PC-9 (cell line): ENCODE measurements at regions of chr3 and their contacts with region 1.

Region 1: GRCh38 chr3:150238998-150239619 is 169.0 kb upstream of the TSC22D2 start:
- DNase-seq: peak; percentile 36 to 41
- H3K4me3 ChIP-seq: peak overlapping the region; percentile 37; the same call in 1 of the 2 replicates
- H3K27ac ChIP-seq: peak overlapping the region; percentile 91
- H3K4me1 ChIP-seq: peaks cover 43% of the 10 kb centered on the region
- H3K27me3 ChIP-seq: no peaks in the 10 kb centered on the region
- CTCF ChIP-seq: peak; percentile 62

Region 2: DNA sequence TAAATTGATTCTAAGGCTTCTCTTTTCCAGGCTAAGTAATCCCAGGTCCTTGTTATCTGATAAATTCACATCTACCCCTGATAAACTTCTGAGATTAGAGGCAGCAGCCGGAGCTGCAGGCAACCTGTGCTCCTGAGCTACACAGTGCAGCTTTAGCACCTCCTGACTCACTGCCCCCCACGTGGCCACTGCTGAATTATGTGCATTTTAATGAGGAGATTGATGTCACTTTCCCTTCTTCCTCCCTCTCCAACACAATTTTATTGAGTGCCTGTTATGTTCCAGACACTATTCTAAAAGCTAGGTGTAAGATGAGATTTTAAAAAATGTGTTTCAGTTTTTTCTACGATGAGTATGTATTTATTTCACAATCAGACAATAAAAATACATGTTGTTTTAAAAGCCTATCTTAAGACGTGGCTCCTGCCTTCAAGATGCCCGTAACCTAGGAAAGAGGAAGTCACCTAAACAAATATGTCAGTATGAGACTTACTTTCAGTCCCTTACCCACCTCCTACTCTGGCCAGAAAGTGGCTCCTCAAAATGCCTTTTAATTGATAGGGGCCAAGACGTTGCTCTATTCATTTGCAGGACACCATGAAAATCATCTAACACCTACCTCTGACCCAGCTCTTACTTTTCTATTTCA is 106.9 kb before region 1 on chr3:
- CTCF ChIA-PET with region 1: no interaction called
- POLR2A ChIA-PET with region 1: no interaction called
- intact Hi-C with region 1: no loop called
- DNase-seq: no peak
- H3K4me3 ChIP-seq: no peak overlapping the region
- H3K27ac ChIP-seq: no peak overlapping the region
- H3K4me1 ChIP-seq: no peaks in the 10 kb centered on the region
- H3K27me3 ChIP-seq: no peaks in the 10 kb centered on the region
- CTCF ChIP-seq: no peak

Region 3: DNA sequence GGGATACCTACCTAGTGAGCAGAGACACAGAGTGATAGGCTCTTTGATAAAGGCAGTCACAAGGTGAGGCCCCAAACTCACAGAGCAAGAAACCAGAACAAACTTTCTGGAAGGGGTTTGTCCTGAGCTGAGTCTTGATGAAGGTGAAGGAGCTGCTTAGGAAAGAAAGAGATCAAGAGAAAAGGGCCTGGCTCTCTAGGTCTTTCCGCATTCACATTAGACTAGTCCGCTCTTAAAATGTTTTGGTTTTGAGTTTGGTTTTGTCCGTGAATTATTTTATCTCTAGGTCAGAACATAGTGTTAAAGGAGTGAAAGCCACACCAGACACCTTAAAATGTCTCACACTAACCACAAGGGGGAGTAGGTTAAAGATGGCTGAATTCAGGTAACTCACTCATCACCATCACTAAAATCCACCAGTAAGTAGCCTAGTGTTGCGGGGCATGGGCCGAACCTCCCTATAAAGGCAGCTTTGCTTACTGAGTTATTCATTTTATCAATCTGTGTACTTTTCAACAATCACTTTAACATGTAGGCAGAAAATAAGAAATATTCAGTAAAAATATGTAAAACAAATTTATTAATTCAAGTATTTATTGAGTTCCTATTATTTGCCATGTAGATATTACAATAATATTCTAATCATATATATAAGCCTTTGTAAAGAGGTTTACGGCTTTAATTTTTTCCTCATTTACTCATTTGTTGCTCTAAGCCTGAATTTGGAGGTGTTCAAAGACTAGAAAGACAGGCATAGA is 47.5 kb after region 1 on chr3:
- CTCF ChIA-PET with region 1: no interaction called
- POLR2A ChIA-PET with region 1: no interaction called
- intact Hi-C with region 1: loop called (anchors 5 kb)
- DNase-seq: peak; percentile 25 to 42
- H3K4me3 ChIP-seq: no peak overlapping the region
- H3K27ac ChIP-seq: peak overlapping the region; percentile 4; the same call in 1 of the 2 replicates
- H3K4me1 ChIP-seq: peaks cover 11% of the 10 kb centered on the region; the same call in 1 of the 2 replicates
- H3K27me3 ChIP-seq: no peaks in the 10 kb centered on the region
- CTCF ChIP-seq: peak; percentile 79